AG04449 (cell line): ENCODE measurements at regions of chr5 and their contacts with region 1.

Region 1: GRCh38 chr5:181243512-181244343 is at the start of gene RACK1:
- DNase-seq: peak; percentile 41
- H3K4me3 ChIP-seq: peak within 1 kb of the TSS; percentile 98
- CTCF ChIP-seq: no peak

Region 2: GRCh38 chr5:181024245-181025064 is 219.3 kb before region 1 on chr5:
- CTCF ChIA-PET with region 1: no interaction called
- POLR2A ChIA-PET with region 1: no interaction called
- DNase-seq: no peak
- H3K4me3 ChIP-seq: no peak overlapping the region
- CTCF ChIP-seq: no peak

Region 3: GRCh38 chr5:181191529-181192394 is 52.0 kb before region 1 on chr5:
- CTCF ChIA-PET with region 1: no interaction called
- POLR2A ChIA-PET with region 1: interaction called, 12 read pairs
- DNase-seq: no peak
- H3K4me3 ChIP-seq: peak overlapping the region; percentile 90
- CTCF ChIP-seq: no peak

Region 4: DNA sequence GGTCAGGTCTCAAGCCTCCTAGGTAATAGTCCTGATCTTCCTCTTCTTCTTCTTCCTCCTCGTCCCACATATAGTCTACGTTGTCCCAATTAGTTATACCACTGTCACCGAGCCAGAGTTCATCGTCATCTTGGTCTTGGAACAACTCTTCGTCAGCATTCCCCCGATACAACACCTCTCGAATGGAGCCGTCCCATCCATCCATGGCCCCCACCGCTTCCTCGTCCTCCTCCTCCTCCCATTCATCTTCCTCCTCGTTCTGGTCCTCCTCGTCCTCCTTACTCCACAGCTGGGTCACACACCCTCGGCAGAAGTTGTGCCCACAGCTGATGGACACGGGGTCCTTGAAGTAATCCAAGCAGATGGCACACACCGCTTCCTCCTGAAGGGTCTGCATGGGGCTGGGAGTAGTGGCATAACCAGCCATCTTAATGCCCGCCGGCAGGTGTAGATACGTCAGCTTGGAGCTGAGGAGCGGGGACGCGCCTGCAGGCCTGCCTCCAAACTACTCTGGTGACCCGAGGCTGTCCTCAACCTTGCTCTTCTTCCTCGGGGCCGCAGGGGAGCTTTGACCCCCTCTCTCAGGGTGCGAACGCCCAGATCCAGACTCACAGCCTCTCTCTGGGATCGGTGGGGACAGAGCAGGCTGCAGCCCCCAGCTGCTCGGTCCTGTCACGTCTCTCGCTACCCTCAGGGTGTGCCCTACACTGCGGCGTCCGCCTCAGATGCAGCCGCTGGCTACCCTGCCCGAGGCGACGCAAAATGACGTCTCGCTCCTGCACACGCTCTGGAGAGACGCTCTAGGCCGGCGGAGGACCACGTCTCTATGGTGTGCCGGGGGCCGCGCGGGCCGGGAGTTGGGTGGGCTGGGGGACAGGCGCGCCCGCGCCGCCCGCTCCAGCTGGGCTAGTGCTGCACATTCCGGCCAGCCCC is 16.9 kb after region 1 on chr5 and contains the start of gene TRIM52:
- CTCF ChIA-PET with region 1: interaction called, 5 read pairs
- POLR2A ChIA-PET with region 1: interaction called, 13 read pairs
- DNase-seq: peak; percentile 44
- H3K4me3 ChIP-seq: peak within 1 kb of the TSS; percentile 97
- CTCF ChIP-seq: no peak

Region 5: GRCh38 chr5:181271081-181271480 is 27.4 kb after region 1 on chr5:
- CTCF ChIA-PET with region 1: no interaction called
- POLR2A ChIA-PET with region 1: no interaction called
- DNase-seq: no peak
- H3K4me3 ChIP-seq: no peak overlapping the region
- CTCF ChIP-seq: no peak